Caco-2 (cell line): ENCODE measurements at regions of chr10 and their contacts with region 1.

Region 1: GRCh38 chr10:100934084-100934659 is 21.4 kb downstream of the SLF2 start:
- DNase-seq: no peak
- H3K4me3 ChIP-seq: no peak overlapping the region
- H3K4me3 Mint-ChIP-seq: no peak overlapping the region
- H3K27ac Mint-ChIP-seq: no peak overlapping the region
- H3K4me1 ChIP-seq: no peaks in the 10 kb centered on the region
- H3K4me1 Mint-ChIP-seq: no peaks in the 10 kb centered on the region
- H3K27me3 ChIP-seq: no peaks in the 10 kb centered on the region
- H3K27me3 Mint-ChIP-seq: no peaks in the 10 kb centered on the region
- CTCF ChIP-seq: peak; percentile 55 to 75

Region 2: DNA sequence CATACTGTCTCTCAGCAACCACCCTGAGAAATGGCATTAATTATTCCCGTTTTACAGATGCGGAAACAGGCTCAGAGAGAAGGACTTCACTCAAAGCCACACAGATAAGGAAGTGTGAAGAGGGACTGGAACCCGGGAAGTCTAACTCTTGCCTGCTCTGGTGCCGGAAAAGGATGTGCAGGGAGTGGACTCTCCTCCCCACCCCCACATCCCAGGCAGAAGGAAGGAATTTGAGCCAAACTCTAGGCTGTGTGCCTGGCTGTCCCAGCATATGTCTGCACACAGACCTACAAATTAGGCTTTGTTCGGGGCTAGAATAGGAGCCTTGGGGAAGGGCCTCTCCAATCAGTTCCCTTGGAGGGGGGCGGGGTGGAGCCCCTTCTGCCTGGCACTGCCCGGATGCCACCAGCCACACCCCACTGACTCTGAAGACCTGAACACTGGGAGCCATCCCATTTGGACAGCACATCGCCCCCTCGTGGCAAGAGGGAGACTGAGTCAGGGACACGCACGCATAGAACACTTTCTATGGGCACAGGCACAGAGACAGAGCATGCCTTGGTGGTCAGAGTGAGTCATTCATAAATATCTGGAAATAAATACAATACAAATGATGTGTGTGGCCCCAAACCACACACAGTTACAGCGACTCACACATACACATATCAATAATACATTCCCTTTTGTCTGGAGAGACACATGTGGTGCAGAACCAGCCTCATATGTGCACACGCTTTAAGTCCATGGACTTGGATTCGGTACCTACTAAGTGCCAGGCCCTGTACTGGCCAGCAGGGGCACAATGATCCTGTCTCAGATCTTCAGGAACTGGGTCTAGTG is 78.6 kb after region 1 on chr10:
- CTCF ChIA-PET with region 1: no interaction called
- POLR2A ChIA-PET with region 1: no interaction called
- intact Hi-C with region 1: loop called (anchors 5 kb)
- DNase-seq: peak; percentile 84 to 85
- H3K4me3 ChIP-seq: no peak overlapping the region
- H3K4me3 Mint-ChIP-seq: no peak overlapping the region
- H3K27ac Mint-ChIP-seq: peak overlapping the region; percentile 2
- H3K4me1 ChIP-seq: no peaks in the 10 kb centered on the region
- H3K4me1 Mint-ChIP-seq: peaks cover 15% of the 10 kb centered on the region
- H3K27me3 ChIP-seq: no peaks in the 10 kb centered on the region
- H3K27me3 Mint-ChIP-seq: no peaks in the 10 kb centered on the region
- CTCF ChIP-seq: peak; percentile 72 to 84